Ascending aorta (tissue), 2 donors: ENCODE measurements at regions of chr1 and their contacts with region 1.

Region 1: DNA sequence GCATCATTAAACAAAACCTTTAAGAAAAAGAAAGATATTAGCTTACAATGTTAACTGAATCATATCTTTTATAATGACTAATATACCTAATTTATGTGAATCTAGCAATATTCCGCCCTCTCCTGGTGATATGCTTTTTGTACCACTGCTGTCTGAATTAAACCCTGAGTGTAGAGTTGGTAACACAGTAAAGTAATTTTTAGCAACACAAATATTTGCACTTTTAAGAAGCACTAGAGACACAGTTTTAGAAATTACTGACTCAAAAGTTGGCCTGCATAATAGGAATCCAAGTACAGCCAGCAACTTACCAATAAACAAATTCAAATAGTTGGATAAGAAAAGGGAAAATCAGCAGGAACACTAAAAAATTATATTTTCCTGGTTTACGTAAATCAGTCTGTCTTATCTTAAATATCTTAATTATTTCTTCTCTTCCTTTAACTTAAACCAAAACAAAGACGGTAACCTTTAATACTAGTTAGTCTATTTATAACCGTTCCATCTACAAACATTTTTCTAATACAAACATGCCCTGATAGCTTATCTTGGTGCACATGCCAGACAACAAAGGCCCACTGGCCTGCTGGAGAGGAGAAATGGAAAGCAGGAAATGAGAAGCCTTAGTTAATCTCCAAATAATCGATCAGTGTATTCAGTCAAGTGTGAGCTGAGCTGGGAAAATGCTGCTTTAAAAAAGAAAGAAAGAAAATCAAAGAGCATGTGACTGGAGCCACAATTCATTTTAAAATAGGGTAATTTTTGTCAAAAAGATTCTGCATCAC is 246.0 kb downstream of the RERE start:
- DNase-seq: no peak
- H3K4me3 ChIP-seq: peak overlapping the region in 1 of 2 donors; percentile 30
- H3K27ac ChIP-seq: peak overlapping the region; percentile 45 to 59
- H3K4me1 ChIP-seq: peaks cover 0 to 7% of the 10 kb centered on the region in 2 donors
- H3K27me3 ChIP-seq: no peaks in the 10 kb centered on the region
- CTCF ChIP-seq: peak; percentile 50 to 64 (median 56)

Region 2: DNA sequence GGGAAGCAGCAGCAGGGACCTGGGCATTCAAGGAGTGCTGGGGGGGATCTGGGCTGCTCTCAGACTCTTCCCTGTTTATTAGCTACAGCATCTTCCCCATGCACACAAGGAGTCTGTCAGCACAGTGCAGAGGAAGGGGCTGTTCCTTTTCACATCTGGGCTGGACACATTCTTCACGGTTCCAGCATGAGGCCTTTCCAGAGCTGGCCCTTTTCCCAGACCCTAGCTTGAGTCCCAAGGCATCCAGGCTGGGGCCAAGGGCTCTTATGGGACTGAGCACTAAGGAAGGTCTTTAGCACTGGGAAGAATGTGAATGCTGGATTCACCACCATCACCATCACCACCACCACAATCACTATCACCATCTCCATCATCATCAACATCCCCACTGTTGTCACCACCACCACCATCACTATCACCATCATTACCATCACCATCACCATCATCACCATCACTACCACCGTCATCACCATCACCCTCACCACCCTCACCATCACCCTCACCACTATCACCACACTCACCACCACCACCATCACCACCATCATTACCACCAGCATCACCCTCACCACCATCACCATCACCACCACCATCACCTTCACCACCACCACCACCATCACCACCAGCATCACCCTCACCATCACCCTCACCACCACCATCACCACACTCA is 581.5 kb before region 1 on chr1:
- intact Hi-C with region 1: loop called (anchors 10 kb)
- DNase-seq: no peak
- H3K4me3 ChIP-seq: no peak overlapping the region
- H3K27ac ChIP-seq: no peak overlapping the region
- H3K4me1 ChIP-seq: no peaks in the 10 kb centered on the region
- H3K27me3 ChIP-seq: no peaks in the 10 kb centered on the region
- CTCF ChIP-seq: no peak

Region 3: DNA sequence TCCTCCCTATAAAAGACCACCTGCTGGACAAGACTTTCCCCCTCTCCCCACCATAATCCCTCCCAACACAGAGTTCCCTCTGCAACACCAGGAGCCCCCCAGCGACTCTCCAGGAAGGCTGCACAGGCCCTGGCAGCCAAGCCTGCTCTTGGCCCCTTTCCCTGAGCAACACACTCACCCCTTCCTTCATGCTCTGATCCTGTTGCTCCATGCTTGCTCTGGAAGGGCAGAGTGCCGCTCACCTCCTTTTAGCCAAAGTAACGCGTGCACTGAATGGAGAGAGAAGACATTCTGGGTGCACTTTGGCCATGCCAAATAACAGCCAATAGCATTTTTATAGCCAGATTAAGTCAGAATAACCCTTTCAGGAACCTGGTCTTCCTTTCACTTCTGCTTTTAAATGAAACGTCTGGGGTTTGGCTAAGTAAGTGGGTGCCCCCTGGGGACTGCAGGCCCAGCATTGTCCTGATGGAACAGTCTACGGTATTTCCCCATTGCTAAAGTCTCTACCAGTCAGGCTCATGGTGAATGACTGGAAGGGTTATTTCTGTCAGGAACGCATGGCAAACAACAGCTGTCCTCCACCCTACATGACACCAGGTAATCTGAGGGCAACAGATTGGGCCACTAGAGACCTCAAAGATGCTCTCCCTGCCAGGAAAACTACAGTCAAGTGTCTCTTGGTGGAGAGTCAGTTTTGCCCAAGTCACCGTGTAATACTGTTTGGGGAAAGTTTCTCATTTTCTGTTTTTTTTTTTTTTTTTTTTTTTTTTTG is 498.1 kb after region 1 on chr1 and contains the start of gene SLC2A5:
- intact Hi-C with region 1: no loop called
- DNase-seq: peak in 1 of 2 donors; percentile 27
- H3K4me3 ChIP-seq: peak within 1 kb of the TSS in 1 of 2 donors; percentile 55
- H3K27ac ChIP-seq: peak within 1 kb of the TSS; percentile 2 to 48
- H3K4me1 ChIP-seq: peaks cover 0 to 10% of the 10 kb centered on the region in 2 donors
- H3K27me3 ChIP-seq: no peaks in the 10 kb centered on the region
- CTCF ChIP-seq: no peak
- total RNA-seq, gene SLC2A5: 13.9 TPM